ENCODE measurements at regions of chr7 and their contacts with region 1.

Region 1: GRCh38 chr7:13099154-13099795 is 411.8 kb downstream of the ARL4A start:
- DNase-seq: peak; percentile 64
- ATAC-seq: peak; percentile 60; the same call in 1 of the 2 replicates
- H3K4me3 ChIP-seq: no peak overlapping the region
- H3K27ac ChIP-seq: no peak overlapping the region
- H3K4me1 ChIP-seq: peaks cover 2% of the 10 kb centered on the region; the same call in 1 of the 2 replicates
- H3K27me3 ChIP-seq: no peaks in the 10 kb centered on the region
- CTCF ChIP-seq: no peak
- POLR2A ChIP-seq: no peak
- RAD21 ChIP-seq: no peak

Region 2: GRCh38 chr7:12888717-12889116 is 210.6 kb before region 1 on chr7:
- CTCF ChIA-PET with region 1: no interaction called
- POLR2A ChIA-PET with region 1: no interaction called
- dilution Hi-C with region 1: no loop called
- in situ Hi-C with region 1: no loop called
- intact Hi-C with region 1: no loop called
- DNase-seq: peak; percentile 66
- ATAC-seq: peak; percentile 19; the same call in 1 of the 2 replicates
- H3K4me3 ChIP-seq: no peak overlapping the region
- H3K27ac ChIP-seq: no peak overlapping the region
- H3K4me1 ChIP-seq: peaks cover 6% of the 10 kb centered on the region; the same call in 1 of the 2 replicates
- H3K27me3 ChIP-seq: no peaks in the 10 kb centered on the region
- CTCF ChIP-seq: no peak
- POLR2A ChIP-seq: no peak
- RAD21 ChIP-seq: no peak

Region 3: GRCh38 chr7:12951397-12951801 is 147.9 kb before region 1 on chr7:
- CTCF ChIA-PET with region 1: no interaction called
- POLR2A ChIA-PET with region 1: no interaction called
- dilution Hi-C with region 1: no loop called
- in situ Hi-C with region 1: no loop called
- intact Hi-C with region 1: loop called (anchors 10 kb)
- DNase-seq: peak; percentile 89
- ATAC-seq: peak; percentile 69
- H3K4me3 ChIP-seq: no peak overlapping the region
- H3K27ac ChIP-seq: no peak overlapping the region
- H3K4me1 ChIP-seq: peaks cover 2% of the 10 kb centered on the region; the same call in 1 of the 2 replicates
- H3K27me3 ChIP-seq: no peaks in the 10 kb centered on the region
- CTCF ChIP-seq: no peak
- POLR2A ChIP-seq: no peak
- RAD21 ChIP-seq: no peak